Activated naive CD4-positive, alpha-beta T cell treated with anti-CD3 and anti-CD28 coated beads for 36 hours (primary cell): ENCODE measurements at regions of chr3 and their contacts with region 1.

Region 1: DNA sequence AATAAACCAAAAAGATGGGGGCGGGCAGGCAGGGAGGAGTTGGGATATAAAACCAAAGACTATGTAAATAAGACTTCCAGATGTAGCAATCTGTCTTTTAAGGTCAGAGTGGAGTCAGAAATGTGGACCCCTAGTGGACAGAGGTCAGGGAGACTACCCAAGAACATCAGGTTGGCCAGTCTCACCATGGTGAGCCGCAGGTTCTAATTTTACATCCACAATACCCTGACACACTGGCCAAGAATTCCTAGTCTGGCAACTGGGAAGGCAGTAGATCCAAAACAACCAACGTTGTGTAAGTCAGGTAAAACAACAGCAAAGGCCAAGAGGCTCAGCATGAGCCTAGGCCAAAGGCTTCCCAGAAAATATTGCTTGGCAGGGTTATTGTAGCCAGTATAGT is 203.4 kb downstream of the FOXP1 start:
- DNase-seq: no peak
- H3K4me3 Mint-ChIP-seq: no peak overlapping the region
- H3K27ac Mint-ChIP-seq: peak overlapping the region; percentile 69
- H3K4me1 Mint-ChIP-seq: peaks cover 88% of the 10 kb centered on the region
- H3K27me3 Mint-ChIP-seq: no peaks in the 10 kb centered on the region

Region 2: GRCh38 chr3:71056327-71056726 is 323.8 kb before region 1 on chr3:
- CTCF ChIA-PET with region 1: no interaction called
- intact Hi-C with region 1: no loop called
- DNase-seq: no peak
- H3K4me3 Mint-ChIP-seq: peak overlapping the region; percentile 34
- H3K27ac Mint-ChIP-seq: peak overlapping the region; percentile 86
- H3K4me1 Mint-ChIP-seq: peaks cover 90% of the 10 kb centered on the region
- H3K27me3 Mint-ChIP-seq: no peaks in the 10 kb centered on the region

Region 3: GRCh38 chr3:71130471-71131374 is 249.4 kb before region 1 on chr3:
- CTCF ChIA-PET with region 1: no interaction called
- intact Hi-C with region 1: loop called (anchors 5 kb)
- DNase-seq: peak; percentile 82
- H3K4me3 Mint-ChIP-seq: peak overlapping the region; percentile 88
- H3K27ac Mint-ChIP-seq: peak overlapping the region; percentile 96
- H3K4me1 Mint-ChIP-seq: peaks cover 66% of the 10 kb centered on the region
- H3K27me3 Mint-ChIP-seq: no peaks in the 10 kb centered on the region

Region 4: DNA sequence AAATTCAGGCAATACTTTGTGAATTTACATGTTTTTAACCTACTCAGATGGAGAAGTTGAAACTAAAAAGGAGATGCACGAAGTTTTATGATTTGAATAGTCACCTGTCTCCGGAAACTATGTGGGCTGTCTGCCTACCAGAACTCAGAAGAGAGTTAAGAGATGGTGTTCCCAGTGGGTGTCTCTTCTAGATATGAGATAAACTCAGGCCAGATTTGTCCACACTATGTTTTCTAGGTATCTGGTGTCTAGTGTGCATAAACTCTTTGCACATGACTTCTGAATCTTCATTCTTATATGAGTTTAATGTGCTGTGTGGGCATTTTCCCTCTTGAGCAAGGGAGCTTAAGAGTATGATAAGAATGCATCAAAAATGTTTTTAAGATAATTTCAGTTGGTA is 19.3 kb before region 1 on chr3:
- CTCF ChIA-PET with region 1: interaction called, 6 read pairs
- intact Hi-C with region 1: loop called (anchors 1 kb)
- DNase-seq: peak; percentile 43
- H3K4me3 Mint-ChIP-seq: peak overlapping the region; percentile 48
- H3K27ac Mint-ChIP-seq: peak overlapping the region; percentile 70
- H3K4me1 Mint-ChIP-seq: peaks cover 82% of the 10 kb centered on the region
- H3K27me3 Mint-ChIP-seq: no peaks in the 10 kb centered on the region

Region 5: DNA sequence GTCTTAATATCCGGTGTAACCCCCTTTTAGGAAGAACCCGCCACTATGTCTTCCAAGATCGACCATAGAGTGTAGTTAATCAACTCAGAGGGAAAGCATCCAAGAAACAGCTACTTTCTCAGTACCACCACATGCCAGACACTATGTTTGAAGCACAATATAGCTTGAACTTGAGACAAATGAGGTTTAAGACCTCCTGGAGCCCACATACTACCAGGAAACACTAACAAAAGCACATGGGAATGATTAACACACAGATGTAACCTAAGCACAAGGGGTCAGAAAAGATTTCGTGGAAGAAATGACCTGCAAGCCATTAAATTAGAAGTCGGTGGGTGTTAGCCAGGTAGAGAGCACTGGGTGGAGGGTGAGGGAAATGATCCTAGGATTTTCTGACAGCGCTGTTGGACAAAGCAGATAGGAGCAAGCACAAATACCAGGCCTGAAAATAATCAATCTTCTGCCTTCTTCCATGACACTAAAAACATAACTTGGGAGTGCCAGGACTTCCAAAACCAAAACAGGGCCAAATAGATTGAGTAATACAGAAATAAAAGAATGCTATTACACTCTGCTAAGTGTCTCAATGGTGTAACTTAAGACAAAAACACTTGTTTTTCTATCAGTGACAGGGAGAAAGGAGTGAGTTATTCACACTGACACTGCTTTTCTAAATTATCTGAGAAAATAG is 10.2 kb before region 1 on chr3:
- CTCF ChIA-PET with region 1: interaction called, 4 read pairs
- intact Hi-C with region 1: loop called (anchors 1 kb)
- DNase-seq: no peak
- H3K4me3 Mint-ChIP-seq: no peak overlapping the region
- H3K27ac Mint-ChIP-seq: no peak overlapping the region
- H3K4me1 Mint-ChIP-seq: peaks cover 74% of the 10 kb centered on the region
- H3K27me3 Mint-ChIP-seq: no peaks in the 10 kb centered on the region

Region 6: DNA sequence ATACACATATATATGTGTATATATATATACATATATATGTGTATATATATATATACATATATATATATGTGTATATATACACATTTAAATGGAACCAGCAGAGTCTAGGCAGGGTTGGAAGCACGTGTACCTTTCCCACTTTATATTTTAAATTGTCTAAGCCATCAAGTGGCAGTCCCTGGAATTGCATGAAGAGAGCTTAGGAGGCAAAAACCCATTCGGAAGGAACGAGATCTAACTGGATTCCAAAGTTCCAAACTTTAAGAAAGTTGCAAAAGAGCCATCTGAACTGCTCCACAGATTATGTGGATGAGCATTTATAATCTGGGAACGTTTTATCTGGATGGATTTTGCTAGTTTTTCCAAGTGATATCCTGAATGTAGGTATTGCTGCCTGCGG is 16.9 kb after region 1 on chr3:
- CTCF ChIA-PET with region 1: interaction called, 12 read pairs
- intact Hi-C with region 1: loop called (anchors 1 kb)
- DNase-seq: peak; percentile 35
- H3K4me3 Mint-ChIP-seq: peak overlapping the region; percentile 5
- H3K27ac Mint-ChIP-seq: no peak overlapping the region
- H3K4me1 Mint-ChIP-seq: peaks cover 81% of the 10 kb centered on the region
- H3K27me3 Mint-ChIP-seq: no peaks in the 10 kb centered on the region

Region 7: DNA sequence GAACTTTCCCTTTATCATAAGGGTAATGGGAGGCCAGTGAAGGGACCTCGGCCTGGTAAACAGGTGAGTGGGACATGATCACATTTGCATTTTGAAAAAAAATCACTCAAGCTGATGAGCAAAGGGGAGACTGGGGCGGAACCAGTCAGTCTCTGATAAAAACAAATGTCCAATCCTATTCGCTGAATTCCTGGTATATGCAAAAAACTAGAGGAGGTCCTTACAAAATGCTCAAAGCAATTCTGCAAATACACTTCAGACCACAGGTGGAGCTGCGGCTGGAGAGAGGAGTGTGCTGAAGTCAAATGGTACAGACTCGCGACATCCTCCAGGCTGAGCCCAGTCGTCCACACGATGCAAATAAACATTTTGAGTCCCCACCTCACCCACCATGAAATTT is 36.8 kb after region 1 on chr3:
- CTCF ChIA-PET with region 1: interaction called, 4 read pairs
- intact Hi-C with region 1: loop called (anchors 1 kb)
- DNase-seq: peak; percentile 76
- H3K4me3 Mint-ChIP-seq: peak overlapping the region; percentile 69
- H3K27ac Mint-ChIP-seq: peak overlapping the region; percentile 39
- H3K4me1 Mint-ChIP-seq: peaks cover 89% of the 10 kb centered on the region
- H3K27me3 Mint-ChIP-seq: no peaks in the 10 kb centered on the region

Region 8: DNA sequence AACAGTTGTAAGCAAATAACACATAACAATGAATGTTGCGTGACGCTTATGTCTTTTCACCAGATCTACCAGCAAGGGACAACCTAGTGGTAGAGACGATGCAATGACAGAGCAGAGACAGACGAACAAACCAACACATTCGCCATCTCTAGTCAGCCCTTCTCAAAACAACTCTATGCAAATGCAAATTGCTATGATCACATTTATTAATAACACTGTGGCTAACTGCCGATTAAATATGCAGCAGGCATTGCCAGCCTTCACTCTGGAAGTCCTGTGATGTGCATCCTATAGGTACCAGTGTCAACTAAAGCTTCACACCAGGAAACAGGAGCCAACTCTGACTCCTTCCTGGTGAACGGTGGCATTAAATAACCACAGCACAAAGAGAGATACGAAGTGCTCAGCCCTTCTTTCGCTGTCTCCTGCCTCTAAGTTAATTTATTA is 109.2 kb after region 1 on chr3:
- CTCF ChIA-PET with region 1: interaction called, 3 read pairs
- intact Hi-C with region 1: loop called (anchors 2 kb)
- DNase-seq: peak; percentile 35
- H3K4me3 Mint-ChIP-seq: peak overlapping the region; percentile 67
- H3K27ac Mint-ChIP-seq: peak overlapping the region; percentile 88
- H3K4me1 Mint-ChIP-seq: peaks cover 88% of the 10 kb centered on the region
- H3K27me3 Mint-ChIP-seq: no peaks in the 10 kb centered on the region